Natural killer cell (primary cell): ENCODE measurements at regions of chr9 and their contacts with region 1.

Region 1: GRCh38 chr9:5696884-5697283 is 68.0 kb downstream of the RIC1 start:
- DNase-seq: no peak
- ATAC-seq: no peak
- H3K4me3 ChIP-seq: no peak overlapping the region
- H3K4me3 Mint-ChIP-seq: no peak overlapping the region
- H3K27ac ChIP-seq: no peak overlapping the region
- H3K27ac Mint-ChIP-seq: no peak overlapping the region
- H3K4me1 ChIP-seq: no peaks in the 10 kb centered on the region
- H3K4me1 Mint-ChIP-seq: peaks cover 9 to 12% of the 10 kb centered on the region in 2 donors
- H3K27me3 ChIP-seq: no peaks in the 10 kb centered on the region
- H3K27me3 Mint-ChIP-seq: no peaks in the 10 kb centered on the region
- CTCF ChIP-seq: no peak

Region 2: DNA sequence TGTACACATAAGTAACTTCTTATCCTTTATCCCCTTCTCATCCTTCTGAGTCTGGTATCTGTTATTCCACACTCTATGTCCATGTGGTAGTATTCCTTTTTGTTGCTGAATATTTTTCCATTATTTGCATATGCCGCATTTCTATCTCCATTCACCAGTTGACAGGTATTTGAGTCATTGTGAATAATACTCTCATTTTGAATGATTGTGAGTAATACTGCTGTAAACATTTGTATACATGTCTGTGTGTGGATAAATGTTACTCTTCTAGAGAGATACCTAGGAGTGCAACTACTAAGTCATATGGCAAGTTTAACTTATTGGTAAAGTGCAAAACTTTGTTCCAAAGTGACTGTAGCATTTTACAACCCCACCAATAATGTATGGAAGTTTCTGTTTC is 52.4 kb before region 1 on chr9:
- intact Hi-C with region 1: loop called (anchors 10 kb)
- DNase-seq: no peak
- ATAC-seq: no peak
- H3K4me3 ChIP-seq: no peak overlapping the region
- H3K4me3 Mint-ChIP-seq: no peak overlapping the region
- H3K27ac ChIP-seq: no peak overlapping the region
- H3K27ac Mint-ChIP-seq: no peak overlapping the region
- H3K4me1 ChIP-seq: peaks cover 3% of the 10 kb centered on the region
- H3K4me1 Mint-ChIP-seq: peaks cover 42 to 47% of the 10 kb centered on the region in 2 donors
- H3K27me3 ChIP-seq: no peaks in the 10 kb centered on the region
- H3K27me3 Mint-ChIP-seq: no peaks in the 10 kb centered on the region
- CTCF ChIP-seq: no peak